CD14-positive monocyte (primary cell): ENCODE measurements at regions of chr7 and their contacts with region 1.

Region 1: GRCh38 chr7:10284001-10284400 is 689.7 kb upstream of the PHF14 start:
- DNase-seq: no peak
- H3K4me3 ChIP-seq: no peak overlapping the region
- H3K4me3 Mint-ChIP-seq: no peak overlapping the region
- H3K27ac ChIP-seq: no peak overlapping the region
- H3K27ac Mint-ChIP-seq: no peak overlapping the region
- H3K4me1 ChIP-seq: no peaks in the 10 kb centered on the region
- H3K4me1 Mint-ChIP-seq: no peaks in the 10 kb centered on the region
- H3K27me3 ChIP-seq: no peaks in the 10 kb centered on the region
- H3K27me3 Mint-ChIP-seq: no peaks in the 10 kb centered on the region
- CTCF ChIP-seq: no peak

Region 2: GRCh38 chr7:10483671-10484070 is 199.7 kb after region 1 on chr7:
- intact Hi-C with region 1: no loop called
- DNase-seq: no peak
- H3K4me3 ChIP-seq: no peak overlapping the region
- H3K4me3 Mint-ChIP-seq: no peak overlapping the region
- H3K27ac ChIP-seq: no peak overlapping the region
- H3K27ac Mint-ChIP-seq: no peak overlapping the region
- H3K4me1 ChIP-seq: no peaks in the 10 kb centered on the region
- H3K4me1 Mint-ChIP-seq: no peaks in the 10 kb centered on the region
- H3K27me3 ChIP-seq: no peaks in the 10 kb centered on the region
- H3K27me3 Mint-ChIP-seq: no peaks in the 10 kb centered on the region
- CTCF ChIP-seq: no peak

Region 3: DNA sequence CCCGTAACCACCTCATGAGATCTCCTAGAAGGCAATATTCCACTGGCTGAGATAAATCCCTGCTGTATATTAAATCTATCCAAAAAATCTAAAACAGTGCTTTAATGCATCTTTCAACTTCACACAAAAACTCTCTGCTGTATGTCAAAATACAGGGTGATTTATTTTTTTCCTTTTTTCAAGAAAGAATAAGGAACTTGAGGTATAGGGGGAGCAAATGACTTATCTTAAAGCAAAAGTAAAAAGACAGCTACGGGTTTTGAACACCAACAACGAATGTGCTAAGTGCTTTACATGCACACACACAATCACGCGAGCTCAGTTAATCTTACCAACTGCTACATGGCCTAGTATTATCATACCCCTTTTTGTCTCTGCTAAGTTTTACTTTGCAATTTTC is 520.8 kb after region 1 on chr7:
- intact Hi-C with region 1: loop called in 1 of 2 experiments (anchors 5 kb)
- DNase-seq: no peak
- H3K4me3 ChIP-seq: no peak overlapping the region
- H3K4me3 Mint-ChIP-seq: no peak overlapping the region
- H3K27ac ChIP-seq: no peak overlapping the region
- H3K27ac Mint-ChIP-seq: no peak overlapping the region
- H3K4me1 ChIP-seq: no peaks in the 10 kb centered on the region
- H3K4me1 Mint-ChIP-seq: no peaks in the 10 kb centered on the region
- H3K27me3 ChIP-seq: no peaks in the 10 kb centered on the region
- H3K27me3 Mint-ChIP-seq: no peaks in the 10 kb centered on the region
- CTCF ChIP-seq: no peak